Activated CD4-positive, alpha-beta T cell treated with anti-CD3 and anti-CD28 coated beads, Interleukin-2, amount 10 ng/mL, durations not matched to agents 24 days and 14 days (primary cell): ENCODE measurements at regions of chr11 and their contacts with region 1.

Region 1: GRCh38 chr11:116986521-116987105 is 111.6 kb downstream of the SIK3 start:
- DNase-seq: peak; percentile 76
- H3K4me3 Mint-ChIP-seq: peak overlapping the region; percentile 66
- H3K27ac Mint-ChIP-seq: peak overlapping the region; percentile 86
- H3K4me1 Mint-ChIP-seq: peaks cover 56% of the 10 kb centered on the region
- H3K27me3 Mint-ChIP-seq: no peaks in the 10 kb centered on the region

Region 2: GRCh38 chr11:116833816-116834534 is 152.6 kb before region 1 on chr11:
- intact Hi-C with region 1: no loop called
- DNase-seq: no peak
- H3K4me3 Mint-ChIP-seq: no peak overlapping the region
- H3K27ac Mint-ChIP-seq: no peak overlapping the region
- H3K4me1 Mint-ChIP-seq: peaks cover 8% of the 10 kb centered on the region
- H3K27me3 Mint-ChIP-seq: peaks cover 4% of the 10 kb centered on the region

Region 3: GRCh38 chr11:116844722-116845121 is 141.9 kb before region 1 on chr11:
- intact Hi-C with region 1: no loop called
- DNase-seq: no peak
- H3K4me3 Mint-ChIP-seq: no peak overlapping the region
- H3K27ac Mint-ChIP-seq: no peak overlapping the region
- H3K4me1 Mint-ChIP-seq: peaks cover 5% of the 10 kb centered on the region
- H3K27me3 Mint-ChIP-seq: no peaks in the 10 kb centered on the region

Region 4: GRCh38 chr11:116879800-116880625 is 106.6 kb before region 1 on chr11:
- intact Hi-C with region 1: loop called (anchors 5 kb)
- DNase-seq: peak; percentile 80
- H3K4me3 Mint-ChIP-seq: no peak overlapping the region
- H3K27ac Mint-ChIP-seq: no peak overlapping the region
- H3K4me1 Mint-ChIP-seq: peaks cover 15% of the 10 kb centered on the region
- H3K27me3 Mint-ChIP-seq: no peaks in the 10 kb centered on the region

Region 5: DNA sequence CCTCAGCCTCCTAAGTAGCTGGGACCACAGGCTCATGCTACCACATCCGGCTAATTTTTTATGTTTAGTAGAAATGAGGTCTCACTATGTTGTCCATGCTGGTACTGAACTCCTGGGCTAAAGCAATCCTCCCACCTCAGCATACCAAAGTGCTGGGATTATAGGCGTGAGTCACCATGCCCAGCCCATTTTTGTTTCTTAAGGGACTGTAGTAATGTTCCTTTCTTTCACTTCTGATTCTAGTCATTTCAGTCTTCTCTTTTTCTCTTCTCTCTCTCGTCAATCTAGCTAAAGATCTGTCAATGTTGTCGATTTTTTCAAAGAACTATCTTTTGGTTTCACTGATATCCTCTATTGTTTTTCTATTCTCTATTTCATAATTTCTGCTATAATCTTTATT is 38.2 kb before region 1 on chr11:
- intact Hi-C with region 1: loop called (anchors 2 kb)
- DNase-seq: peak; percentile 71
- H3K4me3 Mint-ChIP-seq: no peak overlapping the region
- H3K27ac Mint-ChIP-seq: peak overlapping the region; percentile 2
- H3K4me1 Mint-ChIP-seq: peaks cover 18% of the 10 kb centered on the region
- H3K27me3 Mint-ChIP-seq: no peaks in the 10 kb centered on the region

Region 6: GRCh38 chr11:117010808-117011540 is 24.4 kb after region 1 on chr11:
- intact Hi-C with region 1: loop called (anchors 1 kb)
- DNase-seq: no peak
- H3K4me3 Mint-ChIP-seq: no peak overlapping the region
- H3K27ac Mint-ChIP-seq: peak overlapping the region; percentile 80
- H3K4me1 Mint-ChIP-seq: peaks cover 30% of the 10 kb centered on the region
- H3K27me3 Mint-ChIP-seq: no peaks in the 10 kb centered on the region

Region 7: GRCh38 chr11:117026593-117027330 is 40.1 kb after region 1 on chr11:
- intact Hi-C with region 1: loop called (anchors 1 kb)
- DNase-seq: peak; percentile 53
- H3K4me3 Mint-ChIP-seq: peak overlapping the region; percentile 36
- H3K27ac Mint-ChIP-seq: peak overlapping the region; percentile 92
- H3K4me1 Mint-ChIP-seq: peaks cover 54% of the 10 kb centered on the region
- H3K27me3 Mint-ChIP-seq: no peaks in the 10 kb centered on the region

Region 8: GRCh38 chr11:117052196-117053149 is 65.9 kb after region 1 on chr11:
- intact Hi-C with region 1: no loop called
- DNase-seq: no peak
- H3K4me3 Mint-ChIP-seq: no peak overlapping the region
- H3K27ac Mint-ChIP-seq: no peak overlapping the region
- H3K4me1 Mint-ChIP-seq: peaks cover 7% of the 10 kb centered on the region
- H3K27me3 Mint-ChIP-seq: no peaks in the 10 kb centered on the region

Region 9: DNA sequence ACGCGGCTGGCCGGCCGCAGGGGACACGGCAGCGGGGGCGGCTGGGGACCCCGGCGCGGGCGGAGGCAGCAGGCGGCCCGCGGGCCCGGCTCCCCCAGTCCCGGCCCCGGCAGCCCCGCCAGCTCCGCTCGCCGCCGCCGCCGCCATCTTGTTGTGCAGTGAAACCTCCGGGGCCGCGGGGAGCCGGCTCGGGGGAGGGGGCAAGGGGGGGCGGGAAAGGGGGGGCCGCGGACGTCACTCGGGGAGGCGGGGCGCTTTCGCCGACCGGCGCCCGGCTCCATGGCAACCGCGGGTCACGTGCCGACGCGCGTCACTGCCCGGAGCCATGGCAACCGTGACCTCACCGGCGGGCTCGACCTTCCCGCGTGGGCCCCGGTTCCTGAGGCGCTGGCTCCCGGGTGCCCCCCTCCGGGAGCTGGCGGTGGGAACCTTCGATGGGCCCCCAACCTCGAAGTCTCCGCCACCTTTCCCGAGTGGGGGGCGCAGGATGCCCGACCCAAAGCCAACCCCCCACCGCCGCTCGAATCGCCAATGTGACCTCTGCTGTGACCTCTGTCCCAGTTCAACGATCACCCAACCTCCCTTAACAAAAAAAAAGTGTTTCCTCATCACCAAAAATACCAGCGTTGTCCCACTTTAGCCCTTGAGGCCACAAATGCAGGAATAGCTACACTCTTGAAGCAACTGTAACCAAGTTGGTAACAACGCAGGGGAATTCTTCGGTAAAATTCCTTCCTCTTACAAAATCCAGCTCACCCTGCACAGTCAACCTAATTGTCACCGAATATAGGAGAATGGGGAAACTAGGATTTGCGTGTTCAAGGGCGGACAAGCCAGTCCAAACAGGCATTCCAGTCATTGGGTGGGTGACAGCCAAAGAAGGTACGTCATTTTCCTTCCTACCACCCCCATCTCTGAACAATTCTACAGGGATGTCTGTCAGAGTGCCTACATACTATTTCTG is 111.9 kb after region 1 on chr11 and contains the start of gene SIK3:
- intact Hi-C with region 1: loop called (anchors 1 kb)
- DNase-seq: peak; percentile 98
- H3K4me3 Mint-ChIP-seq: peak within 1 kb of the TSS; percentile 98
- H3K27ac Mint-ChIP-seq: peak within 1 kb of the TSS; percentile 98
- H3K4me1 Mint-ChIP-seq: peaks cover 42% of the 10 kb centered on the region
- H3K27me3 Mint-ChIP-seq: peaks cover 2% of the 10 kb centered on the region
- total RNA-seq, gene SIK3: 38.4 and 38.7 TPM in 2 replicates